T-cell (primary cell): ENCODE measurements at regions of chr14 and their contacts with region 1.

Region 1: GRCh38 chr14:36690301-36691033 is 28.8 kb downstream of the PAX9 start:
- DNase-seq: no peak
- ATAC-seq: no peak
- H3K4me3 ChIP-seq: no peak overlapping the region
- H3K4me3 Mint-ChIP-seq: no peak overlapping the region
- H3K27ac ChIP-seq: no peak overlapping the region
- H3K27ac Mint-ChIP-seq: no peak overlapping the region
- H3K4me1 ChIP-seq: no peaks in the 10 kb centered on the region
- H3K4me1 Mint-ChIP-seq: no peaks in the 10 kb centered on the region
- H3K27me3 ChIP-seq: no peaks in the 10 kb centered on the region
- H3K27me3 Mint-ChIP-seq: peaks cover 6 to 8% of the 10 kb centered on the region in 2 donors

Region 2: DNA sequence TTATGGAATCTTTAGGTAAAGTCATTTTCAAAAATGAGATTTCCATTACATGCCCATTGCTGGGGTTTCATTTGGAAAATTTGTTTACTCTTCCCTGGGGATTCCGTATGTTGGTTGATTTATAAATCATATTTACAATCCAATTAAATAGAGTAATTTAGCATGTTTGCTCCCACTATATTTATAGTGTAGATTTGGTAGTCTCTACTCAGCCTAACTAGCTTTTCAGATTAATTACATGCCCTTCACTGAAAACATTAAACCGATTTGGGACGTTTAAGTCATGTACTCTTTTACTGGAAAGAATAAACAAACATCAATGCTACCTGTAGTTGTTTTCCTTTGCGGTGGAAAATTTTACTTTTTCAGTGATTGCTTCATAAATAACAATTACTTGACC is 18.4 kb before region 1 on chr14:
- CTCF ChIA-PET with region 1: no interaction called
- POLR2A ChIA-PET with region 1: interaction called in 1 of 2 experiments, 12 read pairs
- DNase-seq: no peak
- ATAC-seq: no peak
- H3K4me3 ChIP-seq: no peak overlapping the region
- H3K4me3 Mint-ChIP-seq: no peak overlapping the region
- H3K27ac ChIP-seq: no peak overlapping the region
- H3K27ac Mint-ChIP-seq: no peak overlapping the region
- H3K4me1 ChIP-seq: no peaks in the 10 kb centered on the region
- H3K4me1 Mint-ChIP-seq: peaks cover 0 to 3% (median 0%) of the 10 kb centered on the region in 3 donors
- H3K27me3 ChIP-seq: peaks cover 8 to 9% of the 10 kb centered on the region in 2 experiments
- H3K27me3 Mint-ChIP-seq: peaks cover 19 to 31% of the 10 kb centered on the region in 2 donors